Psoas muscle (tissue), 8 donors: ENCODE measurements at regions of chr1 and their contacts with region 1.

Region 1: DNA sequence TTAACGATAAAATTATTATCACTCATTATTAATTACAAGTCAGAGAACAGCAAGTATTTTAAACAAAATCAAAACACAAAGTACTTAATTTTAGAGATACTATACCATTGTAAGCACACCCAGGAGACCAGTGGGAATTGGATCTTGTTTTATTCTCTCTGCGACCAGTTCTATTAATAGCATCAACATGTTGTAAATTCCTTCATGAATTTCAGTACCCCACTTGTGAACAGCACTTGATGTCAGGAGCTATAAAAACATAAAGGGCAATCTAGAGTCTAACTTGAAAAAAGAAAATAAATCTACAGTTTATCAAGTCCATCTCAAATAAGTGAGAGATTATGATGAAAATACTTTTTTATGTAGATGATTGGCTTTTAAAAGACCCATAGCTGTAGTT is 42.9 kb downstream of the USP24 start:
- DNase-seq: no peak
- ATAC-seq: peak; percentile 40 to 78 (median 64)
- H3K4me3 ChIP-seq: no peak overlapping the region
- H3K27ac ChIP-seq: peak overlapping the region; percentile 58
- H3K4me1 ChIP-seq: peaks cover 44% of the 10 kb centered on the region
- H3K27me3 ChIP-seq: no peaks in the 10 kb centered on the region
- CTCF ChIP-seq: no peak

Region 2: GRCh38 chr1:55117941-55118340 is 54.3 kb before region 1 on chr1:
- intact Hi-C with region 1: no loop called
- DNase-seq: no peak
- ATAC-seq: no peak
- H3K4me3 ChIP-seq: no peak overlapping the region
- H3K27ac ChIP-seq: no peak overlapping the region
- H3K4me1 ChIP-seq: no peaks in the 10 kb centered on the region
- H3K27me3 ChIP-seq: no peaks in the 10 kb centered on the region
- CTCF ChIP-seq: no peak

Region 3: GRCh38 chr1:55155514-55155913 is 16.8 kb before region 1 on chr1:
- intact Hi-C with region 1: loop called in 1 of 2 experiments (anchors 2 kb)
- DNase-seq: peak; percentile 61 to 80
- ATAC-seq: peak; percentile 80 to 95 (median 90)
- H3K4me3 ChIP-seq: no peak overlapping the region
- H3K27ac ChIP-seq: peak overlapping the region; percentile 50
- H3K4me1 ChIP-seq: peaks cover 16% of the 10 kb centered on the region
- H3K27me3 ChIP-seq: no peaks in the 10 kb centered on the region
- CTCF ChIP-seq: no peak